Dorsolateral prefrontal cortex (tissue), 120 donors: ENCODE measurements at regions of chr12 and their contacts with region 1.

Region 1: DNA sequence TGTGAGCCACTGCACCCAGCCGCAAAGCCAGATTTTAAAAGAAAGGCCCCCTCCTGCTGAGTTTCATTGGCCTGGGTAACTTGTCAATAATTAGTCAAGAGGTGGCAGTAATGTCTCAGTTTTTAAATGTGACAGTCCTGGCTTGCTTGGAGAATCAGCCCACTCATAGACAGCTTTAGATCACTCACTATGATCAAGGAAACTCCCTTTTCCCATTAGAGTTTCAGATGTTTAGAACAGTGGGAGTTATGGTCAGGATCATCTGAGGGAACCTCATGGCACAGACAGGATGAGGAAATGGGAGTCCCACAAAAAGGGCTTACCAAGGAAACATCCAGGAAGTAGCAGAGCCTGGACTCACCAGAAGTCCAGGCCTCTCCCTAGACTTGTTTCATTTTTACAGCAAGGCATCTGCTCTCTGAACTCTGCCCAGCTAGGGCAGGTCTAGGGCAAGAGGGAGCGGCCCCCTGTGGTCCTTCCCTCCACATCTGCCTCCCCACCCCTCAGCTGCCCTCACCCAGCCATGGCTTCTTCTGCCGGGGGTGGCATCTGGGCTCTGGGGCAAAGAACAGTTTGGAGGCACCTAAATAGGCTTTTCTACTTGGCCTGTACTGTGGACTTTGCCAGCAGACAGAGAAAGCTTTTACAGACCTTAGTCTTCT is 11.2 kb downstream of the BCL2L14 start:
- DNase-seq: no peak
- H3K4me3 ChIP-seq: no peak overlapping the region
- H3K27ac ChIP-seq: peak overlapping the region in 35 of 59 donors; percentile 7 to 72 (median 42)
- H3K27me3 ChIP-seq: no peaks in the 10 kb centered on the region
- CTCF ChIP-seq: peak in 54 of 56 donors; percentile 26 to 79 (median 56)

Region 2: GRCh38 chr12:11981121-11981733 is 100.7 kb before region 1 on chr12:
- intact Hi-C with region 1: no loop called
- DNase-seq: no peak
- H3K4me3 ChIP-seq: no peak overlapping the region
- H3K27ac ChIP-seq: no peak overlapping the region
- H3K27me3 ChIP-seq: no peaks in the 10 kb centered on the region
- CTCF ChIP-seq: no peak

Region 3: GRCh38 chr12:12272869-12273268 is 190.9 kb after region 1 on chr12:
- intact Hi-C with region 1: loop called (anchors 5 to 10 kb)
- DNase-seq: no peak
- H3K4me3 ChIP-seq: no peak overlapping the region
- H3K27ac ChIP-seq: no peak overlapping the region
- H3K27me3 ChIP-seq: no peaks in the 10 kb centered on the region
- CTCF ChIP-seq: no peak

Region 4: GRCh38 chr12:12327802-12328201 is 245.8 kb after region 1 on chr12:
- intact Hi-C with region 1: loop called (anchors 2 to 5 kb)
- DNase-seq: no peak
- H3K4me3 ChIP-seq: peak overlapping the region in 1 of 59 donors; percentile 25
- H3K27ac ChIP-seq: peak overlapping the region in 13 of 59 donors; percentile 9 to 38 (median 21)
- H3K27me3 ChIP-seq: no peaks in the 10 kb centered on the region
- CTCF ChIP-seq: peak; percentile 43 to 91 (median 75)

Region 5: DNA sequence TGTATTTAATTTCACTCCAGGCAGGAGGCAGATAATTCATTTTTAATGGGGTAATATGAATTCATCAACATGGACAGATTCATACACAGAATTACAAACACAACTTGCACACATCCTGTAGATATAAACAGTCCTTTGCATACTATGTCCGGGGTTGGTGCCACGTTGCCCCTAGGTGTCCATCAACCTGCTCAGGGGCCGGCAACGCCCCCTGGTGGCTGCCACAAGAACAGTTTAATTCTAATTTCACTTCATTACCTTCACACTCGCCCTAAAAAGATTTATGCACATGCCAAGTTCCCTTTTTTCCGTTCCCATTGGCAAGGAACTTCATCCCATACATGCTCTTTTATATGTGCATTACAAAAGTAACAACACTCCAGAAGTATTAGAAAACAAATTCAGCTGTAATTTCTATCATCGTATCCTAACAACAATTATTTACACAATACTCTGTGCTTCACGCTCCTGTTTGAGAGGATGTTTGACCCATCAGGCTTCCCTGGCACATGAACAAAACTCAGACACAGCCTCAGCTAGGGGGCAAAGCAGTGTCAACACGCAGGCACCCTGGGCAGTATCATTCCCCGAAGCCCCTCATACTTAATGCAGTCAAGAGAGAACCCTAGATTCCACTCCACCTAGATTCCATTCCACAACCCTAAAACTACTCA is 252.5 kb after region 1 on chr12:
- intact Hi-C with region 1: loop called (anchors 2 to 5 kb)
- DNase-seq: peak in 5 of 10 donors; percentile 10 to 54 (median 35)
- H3K4me3 ChIP-seq: peak overlapping the region in 3 of 59 donors; percentile 5 to 9 (median 7)
- H3K27ac ChIP-seq: peak overlapping the region in 33 of 59 donors; percentile 3 to 79 (median 63)
- H3K27me3 ChIP-seq: no peaks in the 10 kb centered on the region
- CTCF ChIP-seq: peak; percentile 60 to 95 (median 80)

Region 6: DNA sequence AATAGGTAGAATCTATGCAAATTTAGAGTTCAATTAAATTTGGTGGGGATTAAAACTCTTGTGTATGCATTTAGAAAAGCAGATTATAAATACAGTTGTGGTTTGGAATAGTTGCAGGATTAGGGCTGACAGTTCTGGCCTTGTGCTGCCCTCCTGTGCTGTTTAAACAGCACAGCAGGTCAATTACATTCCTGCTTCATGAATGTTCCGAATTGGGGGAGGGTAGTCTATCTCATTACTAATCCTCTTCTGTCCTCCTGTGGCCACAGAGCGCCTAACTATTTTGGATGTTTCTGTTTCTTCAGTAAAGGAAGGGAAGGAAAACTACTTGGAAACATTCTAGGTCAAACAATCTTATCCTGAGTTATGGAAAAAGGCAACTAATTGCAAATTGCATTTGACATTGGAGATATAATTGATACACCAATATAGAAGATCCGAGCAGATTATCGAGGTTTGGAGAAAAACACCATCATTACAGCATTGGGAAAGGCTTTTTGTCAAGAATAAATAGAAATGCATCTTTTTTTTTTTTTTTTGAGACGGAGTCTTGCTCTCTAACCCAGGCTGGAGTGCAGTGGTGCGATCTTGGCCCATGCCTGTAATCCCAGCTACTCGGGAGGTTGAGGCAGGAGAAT is 622.7 kb after region 1 on chr12:
- intact Hi-C with region 1: loop called (anchors 5 to 10 kb)
- DNase-seq: peak in 7 of 10 donors; percentile 47 to 73 (median 59)
- H3K4me3 ChIP-seq: peak overlapping the region in 3 of 59 donors; percentile 2 to 24 (median 2)
- H3K27ac ChIP-seq: peak overlapping the region in 42 of 59 donors; percentile 4 to 74 (median 44)
- H3K27me3 ChIP-seq: no peaks in the 10 kb centered on the region
- CTCF ChIP-seq: peak; percentile 74 to 100 (median 93)